ENCODE measurements at regions of chr20 and their contacts with region 1.

Region 1: GRCh38 chr20:37192137-37192854 is 12.9 kb upstream of the MROH8 start:
- DNase-seq: peak; percentile 90
- ATAC-seq: peak; percentile 90
- H3K4me3 ChIP-seq: no peak overlapping the region
- H3K27ac ChIP-seq: no peak overlapping the region
- H3K4me1 ChIP-seq: peaks cover 5% of the 10 kb centered on the region
- H3K27me3 ChIP-seq: no peaks in the 10 kb centered on the region
- CTCF ChIP-seq: peak; percentile 90

Region 2: GRCh38 chr20:37081717-37082289 is 110.5 kb before region 1 on chr20:
- CTCF ChIA-PET with region 1: interaction called, 12 read pairs
- POLR2A ChIA-PET with region 1: no interaction called
- intact Hi-C with region 1: no loop called
- DNase-seq: no peak
- ATAC-seq: peak; percentile 46
- H3K4me3 ChIP-seq: no peak overlapping the region
- H3K27ac ChIP-seq: no peak overlapping the region
- H3K4me1 ChIP-seq: no peaks in the 10 kb centered on the region
- H3K27me3 ChIP-seq: no peaks in the 10 kb centered on the region
- CTCF ChIP-seq: peak; percentile 58

Region 3: DNA sequence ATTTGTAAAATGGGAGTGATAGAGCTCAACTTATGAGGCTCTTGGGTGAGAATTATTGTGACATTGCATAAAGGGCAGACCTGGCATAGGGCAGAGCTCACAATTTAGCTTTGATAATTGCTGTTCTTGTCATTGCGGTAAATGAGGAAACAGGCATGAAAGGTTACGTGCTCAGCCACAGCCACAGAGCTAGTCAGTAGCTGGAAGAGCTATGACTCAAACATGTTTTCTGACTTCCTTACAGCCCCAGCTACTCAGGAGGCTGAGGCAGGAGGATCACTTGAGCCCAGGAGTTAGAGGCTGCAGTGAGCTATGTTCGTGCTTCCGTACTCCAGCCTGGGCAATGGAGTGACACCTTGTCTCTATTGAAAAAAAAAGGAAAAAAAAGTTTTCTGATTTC is 72.9 kb after region 1 on chr20:
- CTCF ChIA-PET with region 1: interaction called, 3 read pairs
- POLR2A ChIA-PET with region 1: no interaction called
- intact Hi-C with region 1: loop called (anchors 5 kb)
- DNase-seq: no peak
- ATAC-seq: no peak
- H3K4me3 ChIP-seq: no peak overlapping the region
- H3K27ac ChIP-seq: no peak overlapping the region
- H3K4me1 ChIP-seq: peaks cover 14% of the 10 kb centered on the region
- H3K27me3 ChIP-seq: peaks cover 15% of the 10 kb centered on the region
- CTCF ChIP-seq: no peak

Region 4: DNA sequence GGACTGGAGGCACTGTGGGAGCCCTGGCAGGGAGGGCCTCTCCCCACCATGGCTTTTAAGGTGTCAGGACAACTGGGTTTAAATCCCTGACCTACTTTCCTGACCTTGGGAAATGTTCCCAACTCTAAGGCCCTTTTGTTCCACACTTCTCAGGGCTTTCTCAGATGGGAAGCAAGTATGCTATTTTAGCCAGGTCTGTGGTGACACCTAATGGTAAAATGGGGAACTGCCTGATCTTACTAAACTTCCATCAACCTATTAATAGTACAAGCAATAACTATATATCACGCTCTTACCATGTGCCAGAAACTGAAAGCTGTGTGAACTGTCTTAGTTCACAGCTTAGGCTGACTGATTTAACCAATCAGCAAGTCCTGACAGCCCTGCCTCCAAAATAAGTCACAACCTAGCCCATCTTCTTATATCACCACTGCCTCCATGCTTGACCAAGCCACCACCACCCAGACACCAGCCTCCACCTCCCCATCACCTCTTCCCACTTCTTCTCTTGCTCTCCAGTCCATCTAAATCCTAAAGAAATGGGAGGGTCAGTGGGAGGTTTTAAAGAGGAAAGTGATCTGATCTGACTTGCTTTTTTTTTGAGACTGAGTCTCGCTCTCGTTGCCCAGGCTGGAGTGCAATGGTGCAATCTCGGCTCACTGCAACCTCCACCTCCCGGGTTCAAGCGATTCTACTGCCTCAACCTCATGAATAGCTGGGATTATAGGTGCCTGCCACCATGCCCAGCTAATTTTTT is 342.3 kb after region 1 on chr20:
- CTCF ChIA-PET with region 1: no interaction called
- POLR2A ChIA-PET with region 1: no interaction called
- intact Hi-C with region 1: loop called (anchors 1 kb)
- DNase-seq: peak; percentile 96
- ATAC-seq: peak; percentile 67
- H3K4me3 ChIP-seq: no peak overlapping the region
- H3K27ac ChIP-seq: no peak overlapping the region
- H3K4me1 ChIP-seq: peaks cover 27% of the 10 kb centered on the region
- H3K27me3 ChIP-seq: no peaks in the 10 kb centered on the region
- CTCF ChIP-seq: peak; percentile 91